Activated CD4-positive, alpha-beta T cell treated with anti-CD3 and anti-CD28 coated beads, Interleukin-2, amount 10 ng/mL, durations not matched to agents 24 days and 14 days (primary cell): ENCODE measurements at regions of chr4 and their contacts with region 1.

Region 1: DNA sequence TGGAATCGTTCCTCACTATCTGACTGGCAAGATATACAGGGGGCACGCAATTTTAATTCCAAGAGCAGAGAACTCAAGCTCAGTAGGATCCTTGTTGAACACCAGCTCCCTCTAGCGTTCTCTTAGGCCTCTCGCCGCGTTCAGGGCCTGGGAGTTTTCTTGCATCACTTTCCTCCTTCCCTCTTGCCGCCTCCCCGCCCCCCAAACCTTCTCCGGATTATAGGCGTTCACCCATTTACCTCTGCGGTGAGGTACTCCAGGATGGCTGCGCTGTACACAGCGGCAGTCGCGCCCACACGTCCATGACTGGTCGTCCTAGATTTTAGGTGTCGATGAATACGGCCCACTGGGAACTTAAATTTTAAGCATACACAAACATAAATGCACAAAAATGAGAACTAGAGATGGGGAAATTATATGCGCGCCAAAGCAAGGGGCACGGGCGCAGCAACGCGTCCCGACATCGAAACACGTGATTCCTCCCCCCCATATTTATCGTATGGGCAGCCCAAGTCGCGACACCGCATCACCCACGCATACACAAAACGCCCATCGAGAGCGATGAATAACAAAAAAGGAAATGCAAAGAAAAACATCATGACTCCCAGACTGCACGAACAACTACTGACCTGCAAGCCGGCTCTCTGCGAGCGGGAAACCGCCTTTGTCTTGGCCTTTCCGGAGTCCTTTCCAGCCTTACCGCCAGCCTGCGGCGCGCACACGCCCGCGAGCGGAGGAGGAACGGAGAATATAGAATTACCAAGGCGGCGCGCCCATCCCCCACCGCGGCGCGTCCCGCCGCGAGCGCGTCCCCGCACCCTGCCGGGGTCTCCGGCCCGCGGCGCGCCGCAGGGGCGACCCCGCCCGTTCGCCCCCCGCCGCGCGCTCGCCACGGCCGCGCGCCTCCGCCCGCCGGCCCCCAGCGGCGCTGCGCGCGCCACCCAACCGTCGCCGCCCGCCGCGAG is 759 bp downstream of the H2AZ1 start:
- DNase-seq: peak; percentile 96
- H3K4me3 Mint-ChIP-seq: no peak overlapping the region
- H3K27ac Mint-ChIP-seq: no peak overlapping the region
- H3K4me1 Mint-ChIP-seq: peaks cover 26% of the 10 kb centered on the region
- H3K27me3 Mint-ChIP-seq: no peaks in the 10 kb centered on the region

Region 2: GRCh38 chr4:99504804-99505569 is 444.3 kb before region 1 on chr4:
- intact Hi-C with region 1: loop called (anchors 5 kb)
- DNase-seq: no peak
- H3K4me3 Mint-ChIP-seq: no peak overlapping the region
- H3K27ac Mint-ChIP-seq: peak overlapping the region; percentile 45
- H3K4me1 Mint-ChIP-seq: peaks cover 34% of the 10 kb centered on the region
- H3K27me3 Mint-ChIP-seq: no peaks in the 10 kb centered on the region

Region 3: GRCh38 chr4:99808260-99808857 is 141.0 kb before region 1 on chr4:
- intact Hi-C with region 1: loop called (anchors 1 kb)
- DNase-seq: peak; percentile 92
- H3K4me3 Mint-ChIP-seq: no peak overlapping the region
- H3K27ac Mint-ChIP-seq: no peak overlapping the region
- H3K4me1 Mint-ChIP-seq: peaks cover 16% of the 10 kb centered on the region
- H3K27me3 Mint-ChIP-seq: peaks cover 13% of the 10 kb centered on the region

Region 4: GRCh38 chr4:99816545-99817308 is 132.6 kb before region 1 on chr4 and contains the start of gene DAPP1:
- intact Hi-C with region 1: loop called (anchors 1 kb)
- DNase-seq: peak; percentile 95
- H3K4me3 Mint-ChIP-seq: peak within 1 kb of the TSS; percentile 95
- H3K27ac Mint-ChIP-seq: peak within 1 kb of the TSS; percentile 97
- H3K4me1 Mint-ChIP-seq: peaks cover 70% of the 10 kb centered on the region
- H3K27me3 Mint-ChIP-seq: no peaks in the 10 kb centered on the region
- total RNA-seq, gene DAPP1: 28.4 and 29.5 TPM in 2 replicates

Region 5: DNA sequence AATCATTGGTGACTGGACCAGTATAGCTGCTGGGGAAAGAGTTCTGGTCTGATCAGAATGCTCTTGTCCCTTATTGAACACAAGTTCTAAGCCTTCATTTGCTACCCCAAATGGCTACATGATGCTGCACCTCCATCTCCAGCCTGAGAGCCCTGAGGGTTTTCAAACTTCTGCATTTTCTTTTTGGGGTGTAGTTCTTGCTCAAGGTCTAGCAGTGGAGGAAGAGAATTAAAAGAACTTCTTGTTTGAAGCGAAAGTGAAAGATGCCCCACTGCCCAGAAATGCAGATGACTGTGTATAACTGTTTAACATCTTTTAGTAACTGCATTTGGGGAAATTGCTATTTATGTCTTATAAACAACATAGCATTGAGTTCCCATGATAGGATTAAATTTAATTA is 93.6 kb before region 1 on chr4:
- intact Hi-C with region 1: loop called (anchors 1 kb)
- DNase-seq: peak; percentile 82
- H3K4me3 Mint-ChIP-seq: peak overlapping the region; percentile 68
- H3K27ac Mint-ChIP-seq: peak overlapping the region; percentile 88
- H3K4me1 Mint-ChIP-seq: peaks cover 67% of the 10 kb centered on the region
- H3K27me3 Mint-ChIP-seq: no peaks in the 10 kb centered on the region

Region 6: DNA sequence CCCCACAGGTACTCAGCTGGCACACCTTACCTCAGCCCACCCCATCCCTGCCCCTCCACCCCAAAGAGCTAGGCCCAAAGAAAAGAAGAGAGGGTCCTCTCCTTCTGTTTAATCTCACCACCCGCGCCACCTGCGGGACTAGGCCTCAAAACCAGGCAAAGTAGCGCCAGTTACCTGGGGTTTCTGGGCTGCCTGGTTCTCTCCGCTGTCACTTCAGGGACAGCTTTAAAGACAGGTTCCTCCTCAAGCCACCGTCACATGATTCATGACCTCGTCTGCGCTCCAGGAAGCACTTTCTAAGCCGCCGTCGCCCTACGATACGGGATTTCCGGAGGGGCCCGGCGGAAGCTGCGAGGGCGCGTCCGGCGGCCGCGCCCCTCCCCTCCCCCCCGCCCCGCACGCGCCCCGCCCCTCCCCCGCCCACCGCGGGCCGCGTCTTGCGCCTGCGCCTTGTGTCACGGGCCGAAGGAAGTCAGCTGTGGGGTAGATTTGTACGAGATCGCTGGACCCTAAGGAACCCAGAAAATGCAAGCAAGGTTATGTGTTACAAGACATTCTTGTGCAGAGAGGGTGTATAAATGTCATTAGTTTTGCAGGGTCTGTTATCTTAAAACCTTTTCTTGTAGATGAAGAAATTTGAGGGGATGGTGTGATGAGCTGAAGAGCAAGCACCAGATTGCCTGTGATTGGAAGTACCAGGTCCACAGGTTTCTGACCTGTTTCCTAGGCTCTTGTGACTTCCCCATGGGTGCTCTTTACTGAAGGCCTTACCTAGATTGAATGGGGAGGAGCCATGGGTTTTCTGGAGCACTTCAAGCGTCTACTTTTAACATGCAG is 54.9 kb before region 1 on chr4 and contains the start of gene LAMTOR3:
- intact Hi-C with region 1: loop called (anchors 1 kb)
- DNase-seq: peak; percentile 96
- H3K4me3 Mint-ChIP-seq: peak within 1 kb of the TSS; percentile 94
- H3K27ac Mint-ChIP-seq: peak within 1 kb of the TSS; percentile 94
- H3K4me1 Mint-ChIP-seq: peaks cover 32% of the 10 kb centered on the region
- H3K27me3 Mint-ChIP-seq: no peaks in the 10 kb centered on the region
- total RNA-seq, gene LAMTOR3: 28.0 and 32.8 TPM in 2 replicates

Region 7: DNA sequence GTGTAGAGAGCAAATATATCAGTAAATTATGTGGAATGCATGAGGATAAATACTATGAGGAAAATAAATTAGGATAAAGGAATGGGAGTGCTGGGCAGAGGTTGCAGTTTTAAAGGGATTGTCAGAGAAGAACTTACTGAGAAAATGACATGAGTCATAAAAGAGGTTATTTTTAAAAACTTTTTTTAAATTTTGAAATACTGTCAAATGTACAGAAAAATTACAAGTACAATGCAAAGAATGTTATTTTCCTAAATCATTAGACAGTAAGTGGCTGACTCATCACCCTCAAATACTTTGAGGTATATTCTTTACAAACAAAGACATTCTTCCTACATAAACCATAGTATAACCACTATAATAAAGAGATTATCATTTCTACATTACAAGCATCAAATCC is 30.6 kb after region 1 on chr4:
- intact Hi-C with region 1: no loop called
- DNase-seq: no peak
- H3K4me3 Mint-ChIP-seq: no peak overlapping the region
- H3K27ac Mint-ChIP-seq: no peak overlapping the region
- H3K4me1 Mint-ChIP-seq: no peaks in the 10 kb centered on the region
- H3K27me3 Mint-ChIP-seq: peaks cover 16% of the 10 kb centered on the region

Region 8: DNA sequence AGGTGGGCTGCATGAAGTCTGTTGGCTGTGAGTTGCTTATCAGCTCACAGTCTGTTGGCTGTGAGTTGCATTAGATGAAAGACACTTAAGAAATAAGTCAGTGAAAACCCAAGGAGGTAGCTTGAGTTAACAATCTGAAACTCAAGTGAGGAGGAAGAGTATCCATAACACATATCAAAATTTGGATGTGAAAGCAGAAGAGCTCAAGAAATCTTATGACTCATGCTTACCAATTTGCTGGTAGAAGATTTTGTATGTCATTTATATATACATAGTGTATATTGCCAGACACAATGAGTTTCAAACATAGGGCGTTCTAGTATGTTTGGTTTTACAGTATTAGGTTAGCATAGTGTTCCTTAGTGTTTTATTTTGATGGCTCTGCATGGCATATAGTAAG is 133.5 kb after region 1 on chr4:
- intact Hi-C with region 1: loop called (anchors 5 kb)
- DNase-seq: no peak
- H3K4me3 Mint-ChIP-seq: no peak overlapping the region
- H3K27ac Mint-ChIP-seq: peak overlapping the region; percentile 30
- H3K4me1 Mint-ChIP-seq: peaks cover 28% of the 10 kb centered on the region
- H3K27me3 Mint-ChIP-seq: no peaks in the 10 kb centered on the region